HepG2 (cell line): ENCODE measurements at regions of chr13 and their contacts with region 1.

Region 1: GRCh38 chr13:112606109-112607001 is 18.4 kb upstream of the TUBGCP3 start:
- DNase-seq: peak; percentile 65
- ATAC-seq: peak; percentile 100
- H3K4me3 ChIP-seq: peak overlapping the region; percentile 51 to 61 (median 51)
- H3K27ac ChIP-seq: no peak overlapping the region
- H3K4me1 ChIP-seq: no peaks in the 10 kb centered on the region; the same call in 1 of the 2 replicates
- H3K27me3 ChIP-seq: peaks cover 3 to 37% of the 10 kb centered on the region in 2 experiments; a peak in 4 of 5 replicates
- CTCF ChIP-seq: peak; percentile 93
- EP300 ChIP-seq: no peak
- POLR2A ChIP-seq: no peak
- RAD21 ChIP-seq: peak; percentile 93

Region 2: GRCh38 chr13:111474136-111475002 is 1132.0 kb before region 1 on chr13:
- CTCF ChIA-PET with region 1: interaction called, 7 read pairs
- POLR2A ChIA-PET with region 1: no interaction called
- in situ Hi-C with region 1: loop called (anchors 10 kb)
- intact Hi-C with region 1: loop called (anchors 1 kb)
- DNase-seq: peak; percentile 18
- ATAC-seq: peak; percentile 83
- H3K4me3 ChIP-seq: no peak overlapping the region
- H3K27ac ChIP-seq: no peak overlapping the region
- H3K4me1 ChIP-seq: no peaks in the 10 kb centered on the region
- H3K27me3 ChIP-seq: peaks cover 8 to 48% of the 10 kb centered on the region in 2 experiments
- CTCF ChIP-seq: peak; percentile 68
- EP300 ChIP-seq: no peak
- POLR2A ChIP-seq: no peak
- RAD21 ChIP-seq: 0 out of 2 replicates have a peak, but pooled peaks have one; percentile 23

Region 3: DNA sequence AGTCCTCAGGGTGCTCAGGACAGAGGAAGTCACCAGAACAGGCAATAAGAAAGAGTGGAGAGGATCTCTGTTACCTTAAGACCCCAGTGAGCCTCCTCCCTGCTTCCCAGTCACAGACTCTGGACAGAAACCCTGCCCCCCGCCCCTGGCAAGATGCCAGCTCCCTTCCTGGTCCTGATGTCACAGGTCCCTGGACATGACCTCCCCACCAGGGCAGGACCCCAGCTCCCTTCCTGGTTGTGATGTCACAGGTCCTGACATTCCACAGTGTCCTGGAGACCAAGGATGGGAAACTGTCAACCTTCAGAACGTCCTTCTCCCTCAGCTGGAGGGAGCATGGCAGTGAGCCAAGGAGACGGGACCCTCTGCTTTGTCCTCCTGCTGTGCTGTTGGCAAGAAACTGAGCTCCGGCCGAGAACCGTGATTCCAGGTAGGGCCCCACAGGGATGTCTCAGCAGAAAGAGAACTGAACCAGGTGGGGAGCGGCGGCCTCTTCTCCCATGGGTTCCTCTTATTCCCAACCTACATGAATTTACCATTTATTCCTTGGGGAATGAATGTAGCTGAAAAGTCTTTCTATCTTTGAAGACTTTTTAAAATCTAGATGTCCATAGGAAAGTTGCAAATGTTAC is 230.2 kb before region 1 on chr13 and contains the start of gene SPACA7:
- CTCF ChIA-PET with region 1: no interaction called
- POLR2A ChIA-PET with region 1: no interaction called
- in situ Hi-C with region 1: no loop called
- intact Hi-C with region 1: no loop called
- DNase-seq: no peak
- ATAC-seq: no peak
- H3K4me3 ChIP-seq: no peak within 1 kb of the TSS
- H3K27ac ChIP-seq: no peak within 1 kb of the TSS
- H3K4me1 ChIP-seq: no peaks in the 10 kb centered on the region
- H3K27me3 ChIP-seq: peaks cover 0 to 13% of the 10 kb centered on the region in 2 experiments; a peak in 3 of 5 replicates
- CTCF ChIP-seq: no peak
- EP300 ChIP-seq: no peak
- POLR2A ChIP-seq: no peak
- RAD21 ChIP-seq: no peak
- total RNA-seq, gene SPACA7: not detected in 2 replicates

Region 4: GRCh38 chr13:112443995-112444860 is 162.1 kb before region 1 on chr13:
- CTCF ChIA-PET with region 1: no interaction called
- POLR2A ChIA-PET with region 1: no interaction called
- in situ Hi-C with region 1: no loop called
- intact Hi-C with region 1: loop called (anchors 2 kb)
- DNase-seq: peak; percentile 44
- ATAC-seq: peak; percentile 92
- H3K4me3 ChIP-seq: no peak overlapping the region
- H3K27ac ChIP-seq: no peak overlapping the region
- H3K4me1 ChIP-seq: no peaks in the 10 kb centered on the region
- H3K27me3 ChIP-seq: peaks cover 10 to 84% of the 10 kb centered on the region in 2 experiments
- CTCF ChIP-seq: peak; percentile 96
- EP300 ChIP-seq: no peak
- POLR2A ChIP-seq: no peak
- RAD21 ChIP-seq: peak; percentile 94

Region 5: DNA sequence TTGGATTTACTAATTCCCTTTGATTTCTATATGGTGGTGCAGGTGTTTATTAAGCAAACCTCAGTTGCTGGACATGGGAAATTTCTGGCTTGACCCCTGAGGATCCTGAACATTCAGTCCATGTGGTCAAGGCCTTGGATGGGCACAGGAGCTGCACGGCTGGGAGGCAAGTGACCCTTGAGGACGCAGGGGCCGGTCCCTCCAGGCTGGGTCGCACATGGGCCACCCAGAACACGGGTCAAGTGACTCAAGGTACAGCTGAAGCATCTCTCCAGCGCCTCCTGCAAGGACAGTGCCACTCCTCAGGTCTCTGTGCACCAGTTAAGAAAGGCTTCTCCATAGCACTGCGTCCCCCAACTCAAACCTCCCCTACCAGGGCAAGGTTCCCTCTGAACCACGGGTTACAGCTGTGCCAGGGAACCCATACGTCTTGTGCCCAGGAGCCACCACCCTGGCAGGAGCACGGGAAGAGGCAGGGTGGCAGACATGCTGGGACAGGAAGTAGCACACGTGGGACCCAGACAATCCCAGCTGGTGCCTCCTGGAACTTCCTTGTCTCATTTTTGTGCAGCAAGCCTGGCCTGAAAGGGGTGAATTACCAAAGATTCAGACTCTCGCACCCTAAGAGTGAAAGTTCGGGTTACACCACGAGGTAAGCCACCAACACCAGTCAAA is 137.1 kb before region 1 on chr13:
- CTCF ChIA-PET with region 1: no interaction called
- POLR2A ChIA-PET with region 1: no interaction called
- in situ Hi-C with region 1: no loop called
- intact Hi-C with region 1: no loop called
- DNase-seq: no peak
- ATAC-seq: no peak
- H3K4me3 ChIP-seq: no peak overlapping the region
- H3K27ac ChIP-seq: no peak overlapping the region
- H3K4me1 ChIP-seq: no peaks in the 10 kb centered on the region
- H3K27me3 ChIP-seq: peaks cover 0 to 13% of the 10 kb centered on the region in 2 experiments; a peak in 2 of 5 replicates
- CTCF ChIP-seq: no peak
- EP300 ChIP-seq: no peak
- POLR2A ChIP-seq: no peak
- RAD21 ChIP-seq: no peak

Region 6: GRCh38 chr13:112510002-112510780 is 96.2 kb before region 1 on chr13:
- CTCF ChIA-PET with region 1: no interaction called
- POLR2A ChIA-PET with region 1: no interaction called
- in situ Hi-C with region 1: no loop called
- intact Hi-C with region 1: loop called (anchors 5 kb)
- DNase-seq: peak; percentile 52
- ATAC-seq: peak; percentile 93
- H3K4me3 ChIP-seq: no peak overlapping the region
- H3K27ac ChIP-seq: no peak overlapping the region
- H3K4me1 ChIP-seq: no peaks in the 10 kb centered on the region
- H3K27me3 ChIP-seq: no peaks in the 10 kb centered on the region
- CTCF ChIP-seq: peak; percentile 56
- EP300 ChIP-seq: no peak
- POLR2A ChIP-seq: no peak
- RAD21 ChIP-seq: no peak

Region 7: DNA sequence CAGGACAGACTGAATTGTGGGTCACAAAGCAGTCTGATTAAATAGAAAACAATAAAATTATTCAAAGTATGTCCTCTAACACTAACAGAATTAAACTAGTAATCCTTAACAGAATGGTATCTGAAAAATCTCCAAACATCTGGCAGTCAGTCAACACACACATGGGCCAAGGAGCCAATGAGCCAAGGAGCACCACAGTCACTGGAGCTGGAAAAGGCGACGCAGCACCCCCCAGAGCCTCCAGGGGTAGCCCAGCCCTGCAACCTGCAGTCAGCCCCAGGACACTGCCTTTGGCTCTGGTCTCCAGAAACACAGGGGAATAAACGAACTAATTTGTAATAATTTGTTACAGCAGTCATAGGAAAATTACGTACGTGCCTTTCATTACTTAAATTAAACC is 30.7 kb before region 1 on chr13:
- CTCF ChIA-PET with region 1: no interaction called
- POLR2A ChIA-PET with region 1: no interaction called
- in situ Hi-C with region 1: no loop called
- intact Hi-C with region 1: no loop called
- DNase-seq: no peak
- ATAC-seq: peak; percentile 58; the same call in 1 of the 3 replicates
- H3K4me3 ChIP-seq: no peak overlapping the region
- H3K27ac ChIP-seq: no peak overlapping the region
- H3K4me1 ChIP-seq: peaks cover 20% of the 10 kb centered on the region
- H3K27me3 ChIP-seq: no peaks in the 10 kb centered on the region
- CTCF ChIP-seq: no peak
- EP300 ChIP-seq: no peak
- POLR2A ChIP-seq: no peak
- RAD21 ChIP-seq: no peak